GM10248 (cell line): ENCODE measurements at regions of chr2 and their contacts with region 1.

Region 1: DNA sequence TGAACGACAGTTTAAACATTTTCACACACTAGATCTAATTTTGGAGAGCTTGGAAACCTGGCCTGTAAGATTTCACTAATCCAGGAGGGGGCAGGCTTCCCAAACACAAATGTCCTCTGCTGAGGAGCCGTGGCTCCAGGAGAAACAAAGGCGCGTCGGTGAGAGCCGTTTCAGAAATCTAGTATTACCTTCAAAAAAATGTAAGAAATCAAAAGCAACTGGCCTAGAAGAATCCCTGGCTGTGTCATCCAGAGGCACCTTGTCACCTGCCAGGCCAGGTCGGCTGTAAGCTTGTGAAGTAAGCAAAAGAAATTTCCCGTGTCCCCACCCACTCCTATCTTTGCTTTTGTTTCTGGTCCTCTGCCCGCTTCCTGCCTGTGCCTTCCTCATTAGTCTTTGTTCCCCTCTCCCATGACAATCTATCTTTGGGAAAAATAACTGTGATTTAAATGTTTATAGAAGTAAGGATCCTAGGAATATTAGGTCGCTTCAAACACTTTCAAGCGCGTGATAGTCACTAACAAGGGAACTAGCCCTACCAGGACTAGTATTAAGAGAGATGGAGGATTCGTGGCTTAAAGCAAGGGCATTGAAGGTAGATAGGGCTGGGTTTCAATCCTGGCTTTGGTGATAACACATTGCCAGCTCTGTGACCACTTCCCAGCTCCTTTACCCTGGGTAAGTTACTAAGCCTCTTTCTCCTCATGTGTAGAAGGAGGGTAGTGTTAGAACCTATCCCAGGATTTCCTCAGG is 99.5 kb upstream of the STK39 start:
- DNase-seq: peak; percentile 72
- CTCF ChIP-seq: peak; percentile 77

Region 2: DNA sequence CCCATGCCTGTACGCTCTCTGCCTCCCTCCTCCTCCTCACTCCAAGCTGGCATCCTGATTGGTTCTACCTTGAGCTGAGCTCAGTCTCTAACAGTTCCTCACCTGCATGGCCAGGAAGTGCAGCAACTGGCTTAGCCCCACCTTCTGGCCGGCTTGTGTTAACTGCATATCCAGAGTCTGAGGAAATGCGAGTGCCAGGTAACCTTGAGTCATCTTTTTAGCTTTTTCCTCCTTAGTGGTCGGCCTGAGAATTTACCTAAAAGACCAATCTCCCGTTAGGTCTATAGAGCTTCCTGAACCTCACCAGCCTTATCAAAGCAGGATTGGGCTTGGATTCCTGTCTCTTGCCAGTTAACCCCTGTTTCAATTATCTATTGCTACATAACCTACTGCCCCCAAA is 10.0 kb before region 1 on chr2:
- CTCF ChIA-PET with region 1: interaction called, 14 read pairs
- POLR2A ChIA-PET with region 1: no interaction called
- DNase-seq: peak; percentile 22
- CTCF ChIP-seq: peak; percentile 5

Region 3: GRCh38 chr2:168357797-168358472 is 11.0 kb after region 1 on chr2:
- CTCF ChIA-PET with region 1: interaction called, 40 read pairs
- POLR2A ChIA-PET with region 1: no interaction called
- DNase-seq: no peak
- CTCF ChIP-seq: no peak

Region 4: GRCh38 chr2:168687314-168687713 is 340.4 kb after region 1 on chr2:
- CTCF ChIA-PET with region 1: interaction called, 37 read pairs
- POLR2A ChIA-PET with region 1: no interaction called
- DNase-seq: no peak
- CTCF ChIP-seq: peak; percentile 51

Region 5: GRCh38 chr2:168705534-168706470 is 358.9 kb after region 1 on chr2:
- CTCF ChIA-PET with region 1: interaction called, 46 read pairs
- POLR2A ChIA-PET with region 1: no interaction called
- DNase-seq: no peak
- CTCF ChIP-seq: no peak

Region 6: GRCh38 chr2:168719446-168719845 is 372.5 kb after region 1 on chr2:
- CTCF ChIA-PET with region 1: no interaction called
- POLR2A ChIA-PET with region 1: no interaction called
- DNase-seq: no peak
- CTCF ChIP-seq: no peak

Region 7: GRCh38 chr2:168758970-168759820 is 412.3 kb after region 1 on chr2:
- CTCF ChIA-PET with region 1: interaction called, 17 read pairs
- POLR2A ChIA-PET with region 1: no interaction called
- DNase-seq: peak; percentile 45
- CTCF ChIP-seq: peak; percentile 28

Region 8: DNA sequence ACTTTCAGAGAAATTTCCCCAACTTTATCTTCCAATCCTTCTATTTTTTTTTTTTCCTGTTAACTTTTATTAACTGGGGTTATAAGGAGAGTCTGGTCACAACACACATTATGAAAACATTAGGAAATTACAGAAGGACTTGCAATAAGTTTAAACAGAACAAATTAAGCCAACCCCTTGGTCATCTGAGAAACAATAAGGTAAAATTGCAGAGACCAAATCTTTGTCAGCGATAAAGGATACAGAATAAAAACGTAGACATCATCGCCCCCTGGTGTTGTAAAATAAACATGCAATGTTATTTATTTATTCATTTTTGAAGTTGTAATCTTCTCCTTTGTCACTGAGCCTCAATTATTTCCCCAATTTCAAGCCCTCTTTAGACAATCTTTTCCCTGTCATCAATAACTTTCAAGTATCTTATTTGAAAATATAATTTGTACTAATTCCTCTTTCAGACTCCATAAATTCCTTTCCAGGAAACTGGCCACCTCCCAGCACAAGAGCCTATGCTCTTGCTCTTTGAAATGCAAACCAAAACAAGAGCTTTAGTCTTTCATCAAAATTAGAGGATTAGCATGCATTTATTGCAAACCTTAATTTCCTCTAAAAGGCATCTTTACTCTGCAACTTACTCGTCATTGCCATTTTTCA is 573.7 kb after region 1 on chr2:
- CTCF ChIA-PET with region 1: interaction called, 50 read pairs
- POLR2A ChIA-PET with region 1: no interaction called
- DNase-seq: peak; percentile 38
- CTCF ChIP-seq: peak; percentile 51